OCI-LY7 (cell line): ENCODE measurements at regions of chr9 and their contacts with region 1.

Region 1: DNA sequence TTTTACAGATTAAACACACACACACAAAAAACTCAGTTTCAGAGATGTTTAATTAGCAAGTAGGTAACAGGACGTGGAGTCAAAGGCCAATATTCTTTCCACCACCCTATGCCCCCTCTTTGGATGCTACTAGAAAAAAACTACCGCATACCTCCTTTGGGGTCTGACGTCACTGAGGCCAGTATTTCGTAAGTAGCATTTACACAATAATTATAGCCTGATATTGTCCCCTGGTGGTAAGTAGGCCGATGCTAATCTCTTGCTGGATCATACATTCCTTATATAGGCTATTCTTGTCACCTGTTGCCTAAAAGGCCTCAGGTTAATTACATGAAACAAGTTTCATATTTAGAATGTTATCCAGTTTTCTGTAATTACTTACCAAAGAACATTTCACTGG is 21.0 kb upstream of the SMARCA2 start:
- DNase-seq: no peak
- H3K4me3 ChIP-seq: no peak overlapping the region
- H3K27ac ChIP-seq: no peak overlapping the region
- H3K4me1 ChIP-seq: no peaks in the 10 kb centered on the region
- CTCF ChIP-seq: no peak

Region 2: GRCh38 chr9:841371-842209 is 1152.6 kb before region 1 on chr9 and contains the start of gene DMRT1:
- CTCF ChIA-PET with region 1: no interaction called
- POLR2A ChIA-PET with region 1: interaction called, 10 read pairs
- intact Hi-C with region 1: no loop called
- DNase-seq: no peak
- H3K4me3 ChIP-seq: no peak within 1 kb of the TSS
- H3K27ac ChIP-seq: no peak within 1 kb of the TSS
- H3K4me1 ChIP-seq: no peaks in the 10 kb centered on the region
- CTCF ChIP-seq: no peak
- total RNA-seq, gene DMRT1: not detected in 2 replicates

Region 3: GRCh38 chr9:1726993-1727759 is 267.0 kb before region 1 on chr9:
- CTCF ChIA-PET with region 1: no interaction called
- POLR2A ChIA-PET with region 1: no interaction called
- intact Hi-C with region 1: no loop called
- DNase-seq: no peak
- H3K4me3 ChIP-seq: no peak overlapping the region
- H3K27ac ChIP-seq: no peak overlapping the region
- H3K4me1 ChIP-seq: no peaks in the 10 kb centered on the region
- CTCF ChIP-seq: peak; percentile 38